ENCODE measurements at regions of chr4 and their contacts with region 1.

Region 1: GRCh38 chr4:113394730-113395530 is 345.5 kb downstream of the ANK2 start:
- DNase-seq: peak; percentile 88
- ATAC-seq: peak; percentile 89
- H3K4me3 ChIP-seq: no peak overlapping the region
- H3K27ac ChIP-seq: no peak overlapping the region
- H3K4me1 ChIP-seq: peaks cover 3% of the 10 kb centered on the region; the same call in 1 of the 2 replicates
- H3K27me3 ChIP-seq: no peaks in the 10 kb centered on the region
- CTCF ChIP-seq: peak; percentile 88
- POLR2A ChIP-seq: peak; percentile 41; the same call in 1 of the 2 replicates
- RAD21 ChIP-seq: peak; percentile 96

Region 2: GRCh38 chr4:113423631-113424030 is 28.7 kb after region 1 on chr4:
- CTCF ChIA-PET with region 1: no interaction called
- POLR2A ChIA-PET with region 1: no interaction called
- dilution Hi-C with region 1: no loop called
- in situ Hi-C with region 1: no loop called
- intact Hi-C with region 1: no loop called
- DNase-seq: peak; percentile 51
- ATAC-seq: no peak
- H3K4me3 ChIP-seq: no peak overlapping the region
- H3K27ac ChIP-seq: no peak overlapping the region
- H3K4me1 ChIP-seq: no peaks in the 10 kb centered on the region
- H3K27me3 ChIP-seq: no peaks in the 10 kb centered on the region
- CTCF ChIP-seq: no peak
- POLR2A ChIP-seq: no peak
- RAD21 ChIP-seq: no peak

Region 3: DNA sequence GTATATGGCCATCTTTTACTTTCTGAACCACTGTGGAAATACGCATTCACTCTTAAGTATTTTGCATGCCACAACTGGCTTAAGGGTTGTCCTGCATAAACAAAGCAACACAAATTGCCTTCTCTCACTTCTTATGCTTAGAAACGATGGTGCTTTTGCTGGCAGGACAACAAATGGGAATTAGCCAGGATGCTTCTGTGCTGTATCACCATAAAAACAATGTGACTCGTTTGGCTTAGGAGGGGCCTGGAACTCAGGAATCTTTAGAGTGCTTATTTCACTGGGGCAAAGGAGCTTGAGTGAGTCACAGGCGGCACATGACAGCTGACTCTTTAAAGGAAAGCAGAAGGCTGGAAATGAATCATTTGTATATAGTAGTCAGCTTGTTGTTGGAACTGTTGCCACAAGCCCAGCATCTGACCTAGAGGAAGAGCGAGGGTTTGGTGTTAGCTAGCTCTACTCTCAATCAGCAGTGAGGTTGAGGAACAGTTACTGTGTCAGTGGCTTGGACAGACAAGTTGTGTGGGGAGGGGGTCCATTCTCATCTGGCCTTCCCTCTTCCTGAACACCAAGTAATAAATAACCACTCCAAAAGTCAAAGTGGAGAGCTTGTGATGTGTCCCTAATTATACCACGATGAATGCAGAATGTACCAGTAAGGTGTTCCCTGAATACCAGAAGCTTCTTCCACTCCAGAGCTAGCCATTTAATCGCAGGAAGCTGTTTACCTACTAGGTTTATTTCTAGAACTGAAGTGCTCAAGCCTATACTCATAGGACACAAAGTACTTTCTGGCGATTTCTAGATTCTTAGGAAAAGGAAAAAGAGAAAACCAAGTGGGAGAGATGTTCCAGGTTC is 73.5 kb after region 1 on chr4:
- CTCF ChIA-PET with region 1: no interaction called
- POLR2A ChIA-PET with region 1: no interaction called
- dilution Hi-C with region 1: no loop called
- in situ Hi-C with region 1: no loop called
- intact Hi-C with region 1: loop called (anchors 2 kb)
- DNase-seq: peak; percentile 100
- ATAC-seq: peak; percentile 95
- H3K4me3 ChIP-seq: peak overlapping the region; percentile 16; the same call in 1 of the 2 replicates
- H3K27ac ChIP-seq: peak overlapping the region; percentile 75
- H3K4me1 ChIP-seq: peaks cover 5% of the 10 kb centered on the region; the same call in 1 of the 2 replicates
- H3K27me3 ChIP-seq: no peaks in the 10 kb centered on the region
- CTCF ChIP-seq: no peak
- POLR2A ChIP-seq: peak; percentile 72
- RAD21 ChIP-seq: peak; percentile 10; the same call in 1 of the 2 replicates

Region 4: GRCh38 chr4:113761620-113762185 is 366.8 kb after region 1 on chr4 and contains the start of gene CAMK2D:
- CTCF ChIA-PET with region 1: interaction called, 7 read pairs
- POLR2A ChIA-PET with region 1: no interaction called
- dilution Hi-C with region 1: no loop called
- in situ Hi-C with region 1: no loop called
- intact Hi-C with region 1: loop called (anchors 1 kb)
- DNase-seq: peak; percentile 89
- ATAC-seq: peak; percentile 50
- H3K4me3 ChIP-seq: peak within 1 kb of the TSS; percentile 93
- H3K27ac ChIP-seq: peak within 1 kb of the TSS; percentile 90
- H3K4me1 ChIP-seq: 0 out of 2 replicates have a peak, but pooled peaks cover 1% of the 10 kb centered on the region
- H3K27me3 ChIP-seq: no peaks in the 10 kb centered on the region
- CTCF ChIP-seq: peak; percentile 75
- POLR2A ChIP-seq: no peak; the same call in 1 of the 2 replicates
- RAD21 ChIP-seq: peak; percentile 66
- total RNA-seq, gene CAMK2D: 156 and 181 TPM in 2 replicates

Region 5: DNA sequence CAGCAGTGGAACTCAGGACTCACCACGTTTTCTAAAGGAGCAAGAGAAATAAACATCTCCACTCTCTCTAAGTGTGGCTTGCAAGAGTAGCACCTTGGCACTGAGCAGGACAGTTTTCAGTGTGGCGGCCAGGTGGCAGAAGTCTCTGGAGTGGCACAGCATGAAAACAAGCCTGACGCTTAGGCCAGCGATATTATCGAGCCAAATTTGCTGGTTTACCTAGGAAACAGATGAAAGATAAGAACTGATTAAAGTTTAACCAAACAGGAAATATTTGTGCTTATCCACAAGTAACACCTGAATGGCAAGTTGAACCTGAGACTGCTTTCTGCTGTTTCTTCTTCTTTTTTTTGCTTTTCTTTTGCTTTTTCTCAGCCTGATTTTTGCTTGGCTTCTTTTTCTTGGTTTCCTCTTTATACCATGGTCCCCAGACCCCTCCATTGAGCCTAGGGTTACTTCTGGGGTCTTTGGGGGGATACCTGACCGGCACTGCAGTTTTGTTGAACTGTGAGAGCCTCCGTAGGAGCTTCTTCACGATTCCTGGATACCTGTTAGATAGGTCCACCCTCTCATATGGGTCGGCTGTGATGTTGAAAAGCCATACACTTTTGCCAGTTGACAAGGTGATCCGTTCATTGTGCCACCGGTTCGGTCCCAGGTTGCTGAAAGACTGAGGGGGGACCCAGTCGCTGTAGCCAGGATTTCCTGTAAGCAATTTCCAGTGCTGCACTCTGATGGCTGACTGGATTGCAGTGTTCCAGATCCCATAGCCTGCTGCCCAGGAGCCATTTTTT is 507.3 kb after region 1 on chr4:
- CTCF ChIA-PET with region 1: no interaction called
- POLR2A ChIA-PET with region 1: no interaction called
- dilution Hi-C with region 1: no loop called
- in situ Hi-C with region 1: loop called (anchors 10 kb)
- intact Hi-C with region 1: no loop called
- DNase-seq: no peak
- ATAC-seq: no peak
- H3K4me3 ChIP-seq: no peak overlapping the region
- H3K27ac ChIP-seq: no peak overlapping the region
- H3K4me1 ChIP-seq: peaks cover 3% of the 10 kb centered on the region
- H3K27me3 ChIP-seq: no peaks in the 10 kb centered on the region
- CTCF ChIP-seq: no peak
- POLR2A ChIP-seq: no peak
- RAD21 ChIP-seq: no peak

Region 6: GRCh38 chr4:114077610-114078009 is 682.7 kb after region 1 on chr4:
- CTCF ChIA-PET with region 1: no interaction called
- POLR2A ChIA-PET with region 1: no interaction called
- dilution Hi-C with region 1: no loop called
- in situ Hi-C with region 1: no loop called
- intact Hi-C with region 1: loop called (anchors 10 kb)
- DNase-seq: peak; percentile 92
- ATAC-seq: peak; percentile 98
- H3K4me3 ChIP-seq: no peak overlapping the region
- H3K27ac ChIP-seq: no peak overlapping the region
- H3K4me1 ChIP-seq: peaks cover 8% of the 10 kb centered on the region
- H3K27me3 ChIP-seq: no peaks in the 10 kb centered on the region
- CTCF ChIP-seq: no peak
- POLR2A ChIP-seq: no peak
- RAD21 ChIP-seq: no peak

Measured in IMR-90 (cell line).